Lower lobe of right lung (tissue), 2 donors: ENCODE measurements at regions of chr5 and their contacts with region 1.

Region 1: DNA sequence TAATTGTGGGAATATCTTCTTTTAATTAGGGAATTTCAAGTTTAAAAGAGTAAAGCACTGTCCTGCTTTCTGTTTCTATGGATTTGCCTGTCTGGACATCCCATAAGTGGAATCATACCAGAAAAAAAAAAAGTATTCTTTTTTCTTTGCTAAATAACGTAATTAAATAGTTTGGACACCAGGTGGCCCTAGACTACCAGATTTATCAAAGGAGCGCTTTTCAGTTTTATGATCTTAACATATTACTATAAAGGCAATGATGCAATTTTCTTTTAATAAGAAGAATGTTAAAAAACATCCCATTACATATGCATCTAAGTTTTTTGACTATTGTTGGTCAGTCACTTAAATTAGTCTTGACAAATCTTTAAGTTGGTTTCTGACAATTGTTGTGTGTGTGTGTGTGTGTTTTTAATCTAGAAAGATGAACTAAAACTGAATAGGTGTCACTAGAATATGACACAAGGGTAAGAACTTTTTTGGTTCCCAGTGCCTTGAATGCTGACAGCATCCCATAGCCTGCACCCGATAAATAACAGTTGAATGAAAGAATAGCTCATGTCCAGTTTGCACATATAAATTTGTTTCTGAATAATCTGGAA is 49.5 kb downstream of the C5orf22 start:
- DNase-seq: no peak
- ATAC-seq: peak in 1 of 2 donors; percentile 27
- H3K4me3 ChIP-seq: no peak overlapping the region
- H3K27ac ChIP-seq: no peak overlapping the region
- H3K4me1 ChIP-seq: no peaks in the 10 kb centered on the region
- H3K27me3 ChIP-seq: no peaks in the 10 kb centered on the region
- CTCF ChIP-seq: peak; percentile 48

Region 2: DNA sequence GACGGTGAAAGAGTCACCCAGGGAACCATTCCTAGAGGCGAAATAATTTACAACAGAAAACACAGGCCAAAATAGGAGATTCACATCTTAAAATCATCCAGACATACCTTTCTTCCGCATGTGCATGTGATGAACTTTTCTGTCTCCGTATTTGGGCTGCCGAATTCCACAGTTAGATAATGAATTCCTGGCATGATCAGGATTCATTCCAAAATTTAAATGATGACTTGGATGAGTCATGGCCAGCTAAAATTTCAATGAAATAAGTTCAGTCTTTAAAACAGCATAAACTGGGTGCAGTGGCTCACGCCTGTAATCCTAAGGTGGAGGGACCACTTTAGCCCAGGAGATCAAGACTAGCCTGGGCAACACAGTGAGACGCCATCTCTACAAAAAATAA is 132.4 kb before region 1 on chr5:
- intact Hi-C with region 1: no loop called
- DNase-seq: no peak
- ATAC-seq: no peak
- H3K4me3 ChIP-seq: no peak overlapping the region
- H3K27ac ChIP-seq: no peak overlapping the region
- H3K4me1 ChIP-seq: no peaks in the 10 kb centered on the region
- H3K27me3 ChIP-seq: no peaks in the 10 kb centered on the region
- CTCF ChIP-seq: no peak

Region 3: DNA sequence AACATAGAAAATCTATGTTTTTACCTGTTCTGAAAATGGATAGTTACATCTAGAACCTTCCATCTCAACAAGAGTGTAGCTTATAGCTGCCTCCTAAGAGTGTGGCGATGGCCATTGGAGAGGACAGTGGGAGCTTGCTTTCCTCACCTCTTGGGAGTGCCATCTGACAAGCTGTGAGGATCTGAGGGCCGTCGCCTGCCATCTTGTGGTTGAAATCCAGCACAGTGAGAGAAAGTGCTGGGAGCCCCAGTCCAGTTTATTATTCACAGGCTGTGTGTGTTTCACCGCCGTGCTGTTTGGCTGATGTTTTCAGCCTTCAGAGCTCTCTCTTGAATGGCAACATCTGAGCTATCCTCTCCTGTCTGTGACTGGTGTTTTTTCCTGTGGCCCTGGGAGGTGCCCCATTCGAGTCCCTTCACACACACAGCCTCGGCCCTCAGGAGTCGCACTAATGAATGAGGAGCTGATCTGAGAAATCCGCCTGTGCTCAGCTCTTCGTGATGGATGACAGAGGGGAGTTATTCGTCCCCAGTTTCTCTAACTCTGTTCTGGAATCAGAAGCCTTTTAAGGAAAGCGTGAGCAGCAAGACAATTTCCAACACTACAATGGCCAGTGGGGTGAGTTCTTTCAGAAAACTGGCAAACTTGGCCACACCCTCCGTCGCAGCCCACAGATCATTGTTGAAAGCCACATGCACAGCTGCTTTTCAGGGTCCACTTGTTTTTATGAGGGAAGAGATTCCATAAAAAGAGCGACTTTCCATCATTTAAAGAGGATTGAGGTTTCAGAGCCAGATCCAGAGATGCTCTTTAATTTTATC is 227.7 kb after region 1 on chr5:
- intact Hi-C with region 1: loop called (anchors 10 kb)
- DNase-seq: peak; percentile 57
- ATAC-seq: peak; percentile 86 to 91
- H3K4me3 ChIP-seq: no peak overlapping the region
- H3K27ac ChIP-seq: no peak overlapping the region
- H3K4me1 ChIP-seq: no peaks in the 10 kb centered on the region
- H3K27me3 ChIP-seq: no peaks in the 10 kb centered on the region
- CTCF ChIP-seq: peak; percentile 71

Region 4: DNA sequence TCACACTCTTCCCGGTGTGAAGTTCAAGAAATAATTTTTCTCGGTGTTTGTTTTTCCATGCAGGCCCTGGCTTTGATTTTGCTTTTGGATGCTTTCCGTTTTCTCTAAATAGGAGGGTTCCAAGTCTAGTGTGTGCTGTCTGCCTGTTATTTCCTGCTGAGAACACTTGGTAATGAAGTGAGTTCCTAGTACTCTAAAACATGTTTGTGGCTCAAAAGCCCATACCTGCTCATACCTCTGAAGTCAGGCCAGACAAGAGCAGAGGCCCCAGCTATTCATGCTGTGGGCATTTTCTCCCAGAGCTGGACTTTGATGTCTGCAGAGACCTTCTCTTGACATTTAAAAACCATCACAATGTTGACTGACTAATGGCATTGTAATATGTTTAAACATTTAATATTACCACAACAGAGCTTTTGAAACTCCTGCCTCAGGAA is 381.3 kb after region 1 on chr5:
- intact Hi-C with region 1: loop called (anchors 10 kb)
- DNase-seq: no peak
- ATAC-seq: peak; percentile 86 to 88
- H3K4me3 ChIP-seq: no peak overlapping the region
- H3K27ac ChIP-seq: peak overlapping the region; percentile 56
- H3K4me1 ChIP-seq: peaks cover 35% of the 10 kb centered on the region
- H3K27me3 ChIP-seq: no peaks in the 10 kb centered on the region
- CTCF ChIP-seq: no peak